Activated B cell treated with CpG ODN at 0.5 μM for 24 hours (primary cell): ENCODE measurements at regions of chr3 and their contacts with region 1.

Region 1: DNA sequence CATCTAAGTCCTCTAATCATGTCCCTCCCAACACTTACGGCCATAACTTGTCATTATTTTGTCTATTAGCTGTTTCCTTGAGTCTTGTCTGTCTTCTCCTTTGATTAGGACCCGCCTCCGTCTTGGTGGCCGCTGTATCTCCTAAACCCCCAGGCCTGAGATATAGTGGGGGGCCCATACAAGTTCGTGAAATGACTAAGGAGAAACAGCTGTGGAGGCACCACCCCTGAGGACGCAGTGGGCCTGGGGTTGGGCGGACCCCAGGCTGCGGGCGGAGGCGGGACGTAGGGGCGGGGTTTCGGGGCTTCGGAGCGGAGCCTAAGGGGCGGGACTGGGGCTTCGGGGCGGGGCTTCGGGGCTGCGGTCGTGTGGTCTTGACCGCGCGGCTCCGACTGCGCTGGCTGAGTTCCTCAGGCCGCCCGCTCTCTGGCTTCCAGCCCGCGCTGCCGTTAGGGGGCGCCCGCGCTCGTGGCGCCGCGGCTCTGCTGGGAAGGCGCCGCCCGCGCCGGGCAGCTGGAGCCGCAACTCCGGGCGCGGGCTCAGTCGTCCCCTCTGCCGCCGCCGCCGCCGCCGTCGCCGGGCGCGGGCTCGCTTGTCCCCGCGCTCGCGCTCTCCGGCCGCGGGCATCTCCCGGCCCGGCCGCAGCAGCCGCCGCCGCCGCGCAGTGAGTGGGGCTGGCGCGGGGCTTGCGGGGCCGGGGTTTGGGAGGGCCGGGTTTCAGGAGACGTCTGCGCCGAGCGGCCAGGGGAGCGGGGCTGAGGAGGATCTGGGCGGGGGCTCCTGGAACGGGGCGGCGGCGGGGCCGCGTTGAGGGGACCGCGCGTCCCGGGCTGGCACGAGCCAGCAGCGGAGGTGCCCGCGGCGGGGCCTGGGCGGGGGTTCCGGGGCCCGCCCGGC is at the start of gene KCTD6:
- DNase-seq: peak; percentile 95
- ATAC-seq: peak; percentile 94
- H3K4me3 Mint-ChIP-seq: peak within 1 kb of the TSS; percentile 88
- H3K27ac Mint-ChIP-seq: peak within 1 kb of the TSS; percentile 74
- H3K4me1 Mint-ChIP-seq: peaks cover 46% of the 10 kb centered on the region
- H3K27me3 Mint-ChIP-seq: peaks cover 5% of the 10 kb centered on the region
- CTCF ChIP-seq: no peak
- total RNA-seq, gene KCTD6: 8.8 and 10.0 TPM in 2 replicates

Region 2: GRCh38 chr3:58332575-58333188 is 159.1 kb before region 1 on chr3 and contains the start of gene PXK:
- CTCF ChIA-PET with region 1: interaction called, 3 read pairs
- POLR2A ChIA-PET with region 1: interaction called, 12 read pairs
- intact Hi-C with region 1: loop called (anchors 1 kb)
- DNase-seq: peak; percentile 84
- ATAC-seq: peak; percentile 74
- H3K4me3 Mint-ChIP-seq: peak within 1 kb of the TSS; percentile 100
- H3K27ac Mint-ChIP-seq: peak within 1 kb of the TSS; percentile 99
- H3K4me1 Mint-ChIP-seq: peaks cover 49% of the 10 kb centered on the region
- H3K27me3 Mint-ChIP-seq: no peaks in the 10 kb centered on the region
- CTCF ChIP-seq: no peak
- total RNA-seq, gene PXK: 70.3 and 81.3 TPM in 2 replicates

Region 3: DNA sequence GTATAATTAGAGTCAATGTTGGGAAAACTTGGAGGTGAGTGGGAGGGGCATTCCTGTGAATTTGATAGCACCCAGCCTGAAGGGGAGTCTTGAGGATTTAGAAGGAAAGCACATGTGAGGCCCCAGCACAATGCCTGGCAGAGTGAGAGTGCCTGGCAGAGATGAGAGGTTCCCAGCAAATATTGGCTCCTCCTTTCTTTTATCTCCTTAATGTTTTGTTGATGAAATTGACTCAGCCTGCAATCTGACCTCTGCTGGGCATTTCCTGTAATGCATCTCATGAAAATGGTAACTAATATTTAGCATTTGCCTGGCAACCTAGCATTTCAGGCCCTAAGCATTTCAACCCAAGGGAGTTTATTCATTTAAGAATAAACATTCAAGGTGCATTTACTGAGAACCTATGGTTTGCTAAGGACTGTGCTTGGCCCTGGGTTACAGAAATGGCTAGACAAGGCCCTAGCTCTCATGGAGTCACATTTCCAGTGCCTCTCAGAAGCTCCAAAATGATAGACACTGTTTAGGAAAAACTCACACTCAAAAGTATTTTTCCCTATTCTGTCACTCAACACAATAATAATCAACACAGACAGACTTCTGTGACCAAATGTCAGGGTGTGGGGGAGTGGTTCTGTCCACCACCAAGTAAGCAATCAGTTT is 77.1 kb before region 1 on chr3:
- CTCF ChIA-PET with region 1: interaction called, 3 read pairs
- POLR2A ChIA-PET with region 1: no interaction called
- intact Hi-C with region 1: loop called (anchors 1 kb)
- DNase-seq: no peak
- ATAC-seq: peak; percentile 81
- H3K4me3 Mint-ChIP-seq: no peak overlapping the region
- H3K27ac Mint-ChIP-seq: no peak overlapping the region
- H3K4me1 Mint-ChIP-seq: peaks cover 48% of the 10 kb centered on the region
- H3K27me3 Mint-ChIP-seq: no peaks in the 10 kb centered on the region
- CTCF ChIP-seq: peak; percentile 55

Region 4: DNA sequence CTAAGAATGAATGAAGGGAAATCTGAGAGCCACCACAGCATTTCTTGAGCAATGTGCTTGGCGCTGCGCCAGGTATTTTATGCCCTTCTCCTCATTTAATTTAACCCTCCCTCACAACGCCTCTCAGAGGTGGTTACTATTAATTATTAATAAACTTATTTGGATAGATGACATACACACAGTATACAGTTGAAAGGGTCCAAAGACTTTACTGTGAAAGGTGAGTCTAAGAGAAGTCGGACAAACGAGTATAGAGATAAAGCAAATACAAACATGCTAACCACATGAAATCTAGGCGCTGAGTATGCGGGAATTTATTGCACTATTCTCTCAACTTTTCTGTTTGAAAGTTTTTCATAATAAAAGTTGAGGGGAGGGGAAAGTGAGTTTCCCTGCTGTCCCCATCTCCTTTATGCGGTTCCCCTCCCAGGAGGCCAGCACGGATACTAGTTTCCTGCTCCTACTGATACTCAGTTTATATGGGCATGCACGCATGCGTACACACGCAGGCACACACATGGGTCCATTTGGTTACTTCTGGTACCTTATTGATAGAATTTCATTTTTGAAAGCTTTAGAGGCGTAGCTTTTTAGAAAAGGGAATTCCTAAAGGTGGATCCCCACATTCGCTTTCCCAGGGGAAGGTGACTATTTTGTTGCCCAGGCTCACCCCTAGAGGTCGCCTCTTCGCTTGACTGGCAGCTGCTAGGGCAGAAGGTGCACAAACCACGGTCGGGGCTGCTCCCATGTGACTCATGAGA is 28.4 kb before region 1 on chr3:
- CTCF ChIA-PET with region 1: interaction called, 4 read pairs
- POLR2A ChIA-PET with region 1: interaction called, 4 read pairs
- intact Hi-C with region 1: loop called (anchors 1 kb)
- DNase-seq: peak; percentile 41
- ATAC-seq: peak; percentile 96
- H3K4me3 Mint-ChIP-seq: peak overlapping the region; percentile 47
- H3K27ac Mint-ChIP-seq: no peak overlapping the region
- H3K4me1 Mint-ChIP-seq: peaks cover 10% of the 10 kb centered on the region
- H3K27me3 Mint-ChIP-seq: no peaks in the 10 kb centered on the region
- CTCF ChIP-seq: peak; percentile 37

Region 5: DNA sequence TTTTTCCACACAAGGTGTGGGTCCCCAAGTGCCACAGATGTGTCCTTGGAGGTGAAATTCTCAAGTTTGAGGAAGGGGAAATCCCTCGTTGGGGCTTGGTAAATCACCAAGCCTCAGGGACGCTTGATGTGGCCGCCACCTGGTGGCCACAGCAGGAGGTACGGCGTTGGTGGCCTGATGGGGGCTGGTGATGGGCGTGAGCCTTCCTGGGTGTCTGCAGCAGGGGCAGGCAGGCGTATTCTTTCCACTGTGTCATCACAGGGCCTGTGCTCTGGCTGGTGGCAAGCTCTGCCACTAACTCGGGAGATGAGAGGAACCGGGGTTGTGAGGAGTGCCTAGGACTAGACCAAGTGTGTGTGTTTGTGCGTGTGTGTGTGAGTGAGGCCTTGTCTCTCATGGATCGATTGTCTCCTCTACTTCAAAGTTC is 41.1 kb after region 1 on chr3:
- CTCF ChIA-PET with region 1: interaction called, 3 read pairs
- POLR2A ChIA-PET with region 1: interaction called, 3 read pairs
- intact Hi-C with region 1: loop called (anchors 1 kb)
- DNase-seq: peak; percentile 75
- ATAC-seq: peak; percentile 100
- H3K4me3 Mint-ChIP-seq: no peak overlapping the region
- H3K27ac Mint-ChIP-seq: no peak overlapping the region
- H3K4me1 Mint-ChIP-seq: peaks cover 7% of the 10 kb centered on the region
- H3K27me3 Mint-ChIP-seq: no peaks in the 10 kb centered on the region
- CTCF ChIP-seq: no peak

Region 6: DNA sequence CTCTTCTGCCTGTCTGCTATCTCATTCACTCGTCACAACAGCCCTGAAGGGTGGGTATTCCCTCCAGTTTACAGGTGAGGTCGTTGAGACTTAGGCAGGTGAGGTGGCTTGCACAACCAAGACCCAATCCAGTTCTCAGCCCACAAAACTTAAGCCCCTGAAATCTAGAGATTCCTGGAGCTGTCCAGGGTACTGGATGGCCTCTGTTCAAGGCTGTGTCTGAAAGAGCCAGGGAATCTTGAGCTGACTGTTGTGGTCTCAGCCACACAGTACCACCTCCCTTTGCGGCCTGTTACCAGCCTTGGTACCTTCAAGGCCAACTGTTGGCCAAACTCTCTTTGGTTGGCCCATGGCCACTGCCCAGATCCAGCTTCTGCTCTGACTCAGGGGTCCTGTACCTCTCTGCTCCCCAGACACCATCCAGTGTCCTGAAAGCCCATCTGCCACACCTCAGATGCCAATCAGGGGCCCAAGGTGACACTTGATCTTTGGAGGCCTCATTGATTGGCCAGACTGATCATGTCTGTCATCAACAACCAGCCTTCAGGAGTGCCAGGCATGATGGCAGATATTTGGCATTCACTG is 96.4 kb after region 1 on chr3:
- CTCF ChIA-PET with region 1: no interaction called
- POLR2A ChIA-PET with region 1: no interaction called
- intact Hi-C with region 1: no loop called
- DNase-seq: no peak
- ATAC-seq: no peak
- H3K4me3 Mint-ChIP-seq: no peak overlapping the region
- H3K27ac Mint-ChIP-seq: no peak overlapping the region
- H3K4me1 Mint-ChIP-seq: peaks cover 23% of the 10 kb centered on the region
- H3K27me3 Mint-ChIP-seq: peaks cover 43% of the 10 kb centered on the region
- CTCF ChIP-seq: no peak